ENCODE measurements at regions of chrX and their contacts with region 1.

Region 1: DNA sequence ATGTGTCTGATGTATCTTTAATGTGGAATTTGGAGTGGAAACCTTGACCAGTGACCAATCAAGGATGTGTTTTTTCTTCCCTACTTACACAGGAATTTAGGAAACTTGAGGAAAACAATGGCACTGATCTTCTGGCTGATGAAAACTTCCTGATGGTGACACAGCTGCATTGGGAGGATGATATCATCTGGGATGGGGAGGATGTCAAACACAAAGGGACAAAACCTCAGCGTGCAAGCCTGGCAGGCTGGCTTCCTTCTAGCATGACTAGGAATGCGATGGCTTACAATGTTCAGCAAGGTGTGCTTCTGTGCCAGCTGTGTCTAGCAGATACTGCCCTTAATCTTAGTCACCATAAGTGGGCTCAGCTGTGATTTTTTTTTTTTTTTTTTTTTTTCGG is 12.6 kb downstream of the TAF1 start:
- DNase-seq: no peak
- H3K4me3 ChIP-seq: no peak overlapping the region
- H3K27ac ChIP-seq: no peak overlapping the region
- H3K4me1 ChIP-seq: no peaks in the 10 kb centered on the region
- H3K27me3 ChIP-seq: no peaks in the 10 kb centered on the region
- CTCF ChIP-seq: no peak
- EP300 ChIP-seq: no peak
- POLR2A ChIP-seq: no peak

Region 2: DNA sequence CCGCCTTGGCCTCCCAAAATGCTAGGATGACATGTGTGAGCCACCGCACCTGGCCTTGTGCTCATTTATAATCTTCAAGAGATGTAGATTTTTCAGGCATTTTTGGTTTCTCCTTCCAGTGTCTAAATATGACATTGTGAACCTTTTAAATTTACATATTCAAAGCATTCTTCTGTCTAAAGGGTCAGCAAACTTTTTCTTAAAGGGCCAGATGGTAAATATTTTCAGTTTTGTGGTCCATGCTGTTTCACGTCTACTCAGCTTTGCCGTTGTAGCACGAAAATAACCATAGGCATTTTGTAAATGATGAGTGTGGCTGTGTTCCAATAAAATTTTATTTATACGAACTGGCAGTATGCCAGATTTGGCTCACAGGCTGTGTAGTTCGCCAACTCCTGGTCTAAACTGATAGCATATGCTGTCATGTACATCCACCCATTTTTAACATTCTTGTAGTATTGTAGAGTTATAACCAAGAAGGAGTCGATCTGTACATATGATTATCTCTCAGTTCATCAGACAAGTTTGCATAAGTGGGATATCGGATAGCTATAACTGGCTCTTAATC is 186.8 kb after region 1 on chrX:
- intact Hi-C with region 1: loop called (anchors 10 kb)
- DNase-seq: no peak
- H3K4me3 ChIP-seq: no peak overlapping the region
- H3K27ac ChIP-seq: no peak overlapping the region
- H3K4me1 ChIP-seq: peaks cover 0 to 6% (median 3%) of the 10 kb centered on the region in 4 donors
- H3K27me3 ChIP-seq: no peaks in the 10 kb centered on the region
- CTCF ChIP-seq: no peak
- EP300 ChIP-seq: no peak
- POLR2A ChIP-seq: no peak

Measured in sigmoid colon (tissue), 7 donors.